B cell (primary cell): ENCODE measurements at regions of chr19 and their contacts with region 1.

Region 1: DNA sequence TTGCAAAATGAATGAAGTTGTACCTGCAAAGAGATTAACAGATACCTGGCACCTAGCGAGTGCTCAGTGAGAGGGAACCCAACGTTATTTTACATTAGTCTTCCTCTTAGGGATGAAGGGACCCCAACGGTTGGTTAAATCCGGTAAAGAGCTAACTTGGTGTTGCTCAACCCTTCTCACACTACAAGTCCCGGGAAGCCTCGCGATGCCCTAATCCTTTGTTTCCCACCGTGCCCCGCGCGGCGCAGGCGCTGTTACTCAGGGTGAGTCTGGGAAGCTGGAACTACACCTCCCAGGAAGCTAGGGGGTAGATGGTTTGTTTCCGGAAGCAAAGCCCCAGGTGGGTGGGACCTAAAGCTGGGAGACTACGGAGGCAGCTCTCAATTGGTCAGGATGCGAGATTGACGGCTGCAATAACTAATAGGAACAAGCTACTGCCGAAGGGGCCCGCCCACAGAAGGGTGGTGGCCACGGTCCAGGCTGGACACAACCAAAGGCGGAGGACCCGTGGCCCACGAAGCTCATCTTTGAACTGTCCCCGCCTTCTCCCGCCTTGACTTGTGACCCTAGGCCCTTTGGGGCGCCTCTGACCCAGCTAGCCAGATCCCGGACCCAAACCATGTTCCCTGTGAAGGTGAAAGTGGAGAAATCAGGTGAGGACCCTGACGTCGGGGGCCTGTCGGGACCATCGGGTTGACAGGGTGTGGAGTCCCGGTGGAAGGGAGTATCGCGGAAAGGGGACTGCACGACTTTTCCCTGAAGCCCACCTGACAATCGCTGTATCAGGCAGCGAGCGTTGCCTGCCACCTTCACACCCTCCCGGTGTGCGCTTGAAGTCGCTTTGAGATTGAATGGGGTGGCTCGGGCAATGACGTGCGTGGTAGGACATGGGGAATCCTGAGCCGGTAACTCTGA is at the start of gene LIN37:
- DNase-seq: peak; percentile 99
- ATAC-seq: peak; percentile 71
- H3K4me3 ChIP-seq: peak within 1 kb of the TSS; percentile 65 to 99 (median 74)
- H3K4me3 Mint-ChIP-seq: peak within 1 kb of the TSS; percentile 99
- H3K27ac ChIP-seq: peak within 1 kb of the TSS; percentile 63 to 92
- H3K27ac Mint-ChIP-seq: peak within 1 kb of the TSS; percentile 97
- H3K4me1 ChIP-seq: peaks cover 30 to 38% of the 10 kb centered on the region in 2 donors
- H3K4me1 Mint-ChIP-seq: peaks cover 49% of the 10 kb centered on the region
- H3K27me3 ChIP-seq: no peaks in the 10 kb centered on the region
- H3K27me3 Mint-ChIP-seq: no peaks in the 10 kb centered on the region
- CTCF ChIP-seq: no peak
- total RNA-seq, gene LIN37: 22.3 and 22.8 TPM in 2 replicates

Region 2: DNA sequence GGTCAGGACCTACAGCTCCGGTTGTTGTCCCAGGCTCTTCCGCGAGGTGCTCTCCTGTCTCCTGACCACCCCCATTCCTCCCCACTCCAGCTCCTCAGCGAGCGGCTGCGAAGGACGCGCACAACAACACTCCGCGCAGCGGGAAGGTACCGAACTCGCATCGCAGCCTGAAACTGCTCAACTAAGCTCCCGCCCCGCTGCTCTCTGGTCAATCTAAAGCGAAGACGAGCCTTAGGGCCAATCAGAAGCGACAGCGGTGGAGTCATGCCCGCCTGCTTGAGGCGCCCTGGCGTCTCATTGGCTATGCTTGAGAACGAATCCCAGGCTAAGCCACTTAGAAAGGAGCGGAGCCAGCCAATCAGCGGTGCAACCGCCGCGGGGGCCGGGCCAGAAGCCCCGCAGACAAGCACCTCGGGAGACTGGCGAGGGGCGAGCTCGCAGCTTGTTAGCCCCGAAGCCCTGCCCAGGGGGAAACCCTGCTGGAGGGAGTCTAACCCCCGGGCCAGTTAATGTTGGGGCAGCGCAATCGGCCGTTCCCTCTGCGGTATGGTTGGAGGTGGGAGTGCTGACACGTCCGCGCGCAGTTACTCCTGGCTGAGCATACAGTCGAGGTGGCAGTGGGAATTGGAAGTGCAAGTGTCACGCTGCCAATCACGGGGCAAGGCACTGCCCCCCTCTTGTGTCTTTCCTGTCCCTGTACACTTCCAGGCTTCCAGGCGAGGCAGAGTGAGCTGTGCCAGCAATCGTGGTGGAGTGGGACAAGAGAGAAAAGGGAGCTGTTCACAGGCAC is 45.9 kb before region 1 on chr19:
- CTCF ChIA-PET with region 1: interaction called, 6 read pairs
- POLR2A ChIA-PET with region 1: interaction called, 6 read pairs
- intact Hi-C with region 1: loop called (anchors 1 kb)
- DNase-seq: peak; percentile 96
- ATAC-seq: peak; percentile 99
- H3K4me3 ChIP-seq: peak overlapping the region in 4 of 5 experiments; percentile 61 to 86 (median 74)
- H3K4me3 Mint-ChIP-seq: peak overlapping the region; percentile 98
- H3K27ac ChIP-seq: peak overlapping the region; percentile 59 to 74
- H3K27ac Mint-ChIP-seq: peak overlapping the region; percentile 98
- H3K4me1 ChIP-seq: peaks cover 0 to 19% of the 10 kb centered on the region in 2 donors
- H3K4me1 Mint-ChIP-seq: peaks cover 8% of the 10 kb centered on the region
- H3K27me3 ChIP-seq: no peaks in the 10 kb centered on the region
- H3K27me3 Mint-ChIP-seq: no peaks in the 10 kb centered on the region
- CTCF ChIP-seq: no peak

Region 3: GRCh38 chr19:35775298-35776110 is 27.1 kb after region 1 on chr19 and contains the start of gene ARHGAP33:
- CTCF ChIA-PET with region 1: no interaction called
- POLR2A ChIA-PET with region 1: no interaction called
- intact Hi-C with region 1: loop called (anchors 1 kb)
- DNase-seq: peak; percentile 99
- ATAC-seq: peak; percentile 99
- H3K4me3 ChIP-seq: peak within 1 kb of the TSS; percentile 26 to 68 (median 58)
- H3K4me3 Mint-ChIP-seq: peak within 1 kb of the TSS; percentile 86
- H3K27ac ChIP-seq: peak within 1 kb of the TSS in 1 of 2 donors; percentile 19
- H3K27ac Mint-ChIP-seq: peak within 1 kb of the TSS; percentile 43
- H3K4me1 ChIP-seq: peaks cover 10 to 16% of the 10 kb centered on the region in 2 donors
- H3K4me1 Mint-ChIP-seq: peaks cover 10% of the 10 kb centered on the region
- H3K27me3 ChIP-seq: no peaks in the 10 kb centered on the region
- H3K27me3 Mint-ChIP-seq: no peaks in the 10 kb centered on the region
- CTCF ChIP-seq: no peak
- total RNA-seq, gene ARHGAP33: 18.2 and 21.6 TPM in 2 replicates

Region 4: GRCh38 chr19:35790981-35791813 is 42.8 kb after region 1 on chr19:
- CTCF ChIA-PET with region 1: no interaction called
- POLR2A ChIA-PET with region 1: no interaction called
- intact Hi-C with region 1: no loop called
- DNase-seq: no peak
- ATAC-seq: no peak
- H3K4me3 ChIP-seq: no peak overlapping the region
- H3K4me3 Mint-ChIP-seq: no peak overlapping the region
- H3K27ac ChIP-seq: no peak overlapping the region
- H3K27ac Mint-ChIP-seq: no peak overlapping the region
- H3K4me1 ChIP-seq: no peaks in the 10 kb centered on the region
- H3K4me1 Mint-ChIP-seq: no peaks in the 10 kb centered on the region
- H3K27me3 ChIP-seq: no peaks in the 10 kb centered on the region
- H3K27me3 Mint-ChIP-seq: peaks cover 11% of the 10 kb centered on the region
- CTCF ChIP-seq: no peak

Region 5: DNA sequence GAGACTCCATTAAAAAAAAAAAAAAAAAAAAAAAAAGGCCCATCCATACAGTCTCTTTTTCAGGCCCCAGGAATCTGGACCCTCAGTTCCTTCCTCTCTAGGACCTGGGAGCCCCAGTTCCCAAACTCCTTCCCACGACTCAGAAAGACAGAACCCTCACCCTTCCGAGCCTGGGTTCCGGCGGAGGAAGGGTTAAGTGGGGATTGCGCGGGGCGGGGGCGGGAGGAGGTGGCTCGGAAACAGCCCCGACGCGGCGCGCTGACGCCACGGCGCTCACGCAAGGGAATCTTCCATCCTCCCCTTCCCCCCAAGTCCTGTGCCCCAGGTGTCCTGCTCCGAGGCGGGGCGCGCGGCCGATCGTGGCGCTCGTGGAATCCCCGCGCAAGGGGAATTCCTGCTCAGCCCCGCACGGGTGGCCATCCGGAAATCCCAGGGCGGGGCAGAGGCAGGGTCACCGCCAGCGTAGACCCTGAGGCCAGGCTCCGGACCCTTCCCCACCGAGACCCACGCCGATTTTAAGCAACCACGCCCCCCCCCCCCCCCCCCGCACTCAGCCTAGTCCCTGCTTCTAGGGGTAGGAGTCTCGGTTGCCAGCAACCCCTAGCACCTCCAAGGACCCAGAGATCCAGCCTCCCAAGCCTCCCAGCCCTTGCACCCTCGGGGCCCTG is 151.3 kb after region 1 on chr19:
- CTCF ChIA-PET with region 1: interaction called, 3 read pairs
- POLR2A ChIA-PET with region 1: interaction called, 11 read pairs
- intact Hi-C with region 1: loop called (anchors 2 kb)
- DNase-seq: peak; percentile 98
- ATAC-seq: peak; percentile 57
- H3K4me3 ChIP-seq: peak overlapping the region; percentile 74 to 100 (median 91)
- H3K4me3 Mint-ChIP-seq: peak overlapping the region; percentile 94
- H3K27ac ChIP-seq: peak overlapping the region; percentile 100
- H3K27ac Mint-ChIP-seq: peak overlapping the region; percentile 98
- H3K4me1 ChIP-seq: peaks cover 53 to 69% of the 10 kb centered on the region in 2 donors
- H3K4me1 Mint-ChIP-seq: peaks cover 64% of the 10 kb centered on the region
- H3K27me3 ChIP-seq: no peaks in the 10 kb centered on the region
- H3K27me3 Mint-ChIP-seq: no peaks in the 10 kb centered on the region
- CTCF ChIP-seq: no peak

Region 6: DNA sequence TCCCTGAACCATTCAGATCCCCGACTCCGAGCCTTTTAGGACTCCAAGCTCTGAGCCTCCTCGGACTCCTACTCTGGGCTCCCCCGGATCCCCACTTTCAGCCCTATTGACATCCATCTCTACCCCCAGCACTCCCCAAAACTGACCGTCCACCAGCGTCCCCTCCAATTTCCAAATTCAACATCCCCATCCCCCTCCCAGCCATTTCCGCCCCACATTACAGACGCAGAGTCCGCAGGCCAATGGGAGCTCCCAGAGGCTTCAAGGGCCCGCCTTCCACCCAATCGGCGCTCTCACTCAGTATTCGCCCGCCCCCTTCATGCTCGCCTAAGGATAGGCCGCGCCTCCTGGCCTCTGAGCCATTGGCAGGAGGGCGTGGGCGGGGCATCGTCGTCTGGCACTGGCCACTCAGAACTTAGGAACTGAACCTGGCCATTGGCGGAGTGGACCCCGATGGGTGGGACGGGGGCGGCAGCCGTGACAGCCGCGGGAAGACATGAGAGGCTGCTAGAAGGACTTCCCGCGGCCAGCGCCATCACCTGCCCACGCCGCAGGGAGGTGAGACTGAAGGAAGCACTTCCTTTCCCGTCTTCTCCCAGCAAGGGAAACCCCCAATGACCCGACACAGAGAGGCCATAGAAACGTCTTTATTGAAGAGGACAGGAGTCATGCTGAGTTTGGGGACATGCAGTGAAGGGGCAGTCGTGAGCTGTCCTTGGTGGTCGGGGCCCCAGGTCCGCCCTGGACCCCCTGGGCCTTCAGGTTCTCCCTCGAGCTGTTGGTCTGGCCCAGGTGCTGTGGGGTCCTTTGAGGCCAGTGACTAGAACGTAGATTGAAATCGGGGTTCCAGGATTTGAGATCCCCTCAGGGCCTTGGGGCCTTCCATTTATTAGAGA is 265.9 kb after region 1 on chr19 and contains the start of gene ALKBH6:
- CTCF ChIA-PET with region 1: no interaction called
- POLR2A ChIA-PET with region 1: interaction called, 3 read pairs
- intact Hi-C with region 1: loop called (anchors 1 kb)
- DNase-seq: peak; percentile 98
- ATAC-seq: peak; percentile 99
- H3K4me3 ChIP-seq: peak within 1 kb of the TSS; percentile 67 to 94 (median 72)
- H3K4me3 Mint-ChIP-seq: peak within 1 kb of the TSS; percentile 99
- H3K27ac ChIP-seq: peak within 1 kb of the TSS; percentile 70 to 86
- H3K27ac Mint-ChIP-seq: peak within 1 kb of the TSS; percentile 93
- H3K4me1 ChIP-seq: peaks cover 16 to 21% of the 10 kb centered on the region in 2 donors
- H3K4me1 Mint-ChIP-seq: peaks cover 28% of the 10 kb centered on the region
- H3K27me3 ChIP-seq: peaks cover 0 to 6% (median 0%) of the 10 kb centered on the region in 4 experiments
- H3K27me3 Mint-ChIP-seq: no peaks in the 10 kb centered on the region
- CTCF ChIP-seq: no peak
- total RNA-seq, gene ALKBH6: 49.4 and 54.5 TPM in 2 replicates